ENCODE measurements at regions of chr17 and their contacts with region 1.

Region 1: GRCh38 chr17:38853292-38854219 is at the start of gene RPL23:
- DNase-seq: peak; percentile 83 to 97
- ATAC-seq: peak; percentile 77 to 91 (median 87)
- H3K4me3 ChIP-seq: peak within 1 kb of the TSS; percentile 75
- H3K4me3 Mint-ChIP-seq: peak within 1 kb of the TSS; percentile 96
- H3K27ac ChIP-seq: peak within 1 kb of the TSS; percentile 98
- H3K27ac Mint-ChIP-seq: peak within 1 kb of the TSS; percentile 99
- H3K4me1 ChIP-seq: peaks cover 29% of the 10 kb centered on the region
- H3K4me1 Mint-ChIP-seq: peaks cover 42 to 45% of the 10 kb centered on the region in 2 donors
- H3K27me3 ChIP-seq: no peaks in the 10 kb centered on the region
- H3K27me3 Mint-ChIP-seq: no peaks in the 10 kb centered on the region
- CTCF ChIP-seq: no peak
- total RNA-seq, gene RPL23: 752 to 934 (median 923) TPM

Region 2: DNA sequence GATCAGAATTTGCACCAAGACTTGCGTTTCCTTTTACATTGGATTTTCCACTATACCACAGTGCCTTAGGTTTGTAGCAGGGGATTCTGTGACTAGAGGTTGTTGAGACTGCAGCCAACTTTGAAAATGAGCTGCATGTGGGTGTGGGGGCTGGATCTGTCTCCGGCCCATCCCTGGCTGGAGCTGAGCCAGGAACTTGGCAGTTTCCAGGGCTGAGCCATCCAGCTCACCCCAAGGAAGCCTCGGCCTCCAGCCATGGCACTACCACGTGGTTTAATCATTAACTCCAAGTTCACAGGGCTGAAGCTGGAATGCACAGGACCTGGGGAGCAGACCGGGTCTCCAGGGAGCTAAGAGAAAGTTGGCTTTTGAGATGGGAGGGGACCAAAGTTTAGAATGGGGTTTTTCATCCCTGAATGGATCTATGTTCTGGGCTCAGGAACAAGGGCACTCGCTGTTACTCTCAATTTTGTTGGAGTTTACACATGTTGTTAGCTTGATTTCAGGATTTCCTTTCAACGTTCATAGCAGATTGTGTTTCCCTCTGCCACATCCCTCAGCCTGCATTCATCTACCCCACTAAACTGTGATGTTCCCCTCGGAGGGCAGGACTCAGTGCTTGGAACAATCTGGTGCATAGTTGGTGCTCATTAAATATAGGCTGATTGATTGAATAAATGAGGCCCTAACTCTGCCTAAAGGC is 1066.3 kb before region 1 on chr17:
- intact Hi-C with region 1: no loop called
- DNase-seq: no peak
- ATAC-seq: no peak
- H3K4me3 ChIP-seq: no peak overlapping the region
- H3K4me3 Mint-ChIP-seq: no peak overlapping the region
- H3K27ac ChIP-seq: no peak overlapping the region
- H3K27ac Mint-ChIP-seq: no peak overlapping the region
- H3K4me1 ChIP-seq: no peaks in the 10 kb centered on the region
- H3K4me1 Mint-ChIP-seq: no peaks in the 10 kb centered on the region
- H3K27me3 ChIP-seq: peaks cover 11% of the 10 kb centered on the region
- H3K27me3 Mint-ChIP-seq: peaks cover 27 to 47% of the 10 kb centered on the region in 2 donors
- CTCF ChIP-seq: no peak

Region 3: GRCh38 chr17:38824899-38825761 is 28.4 kb before region 1 on chr17 and contains the start of gene CWC25:
- intact Hi-C with region 1: loop called (anchors 1 kb)
- DNase-seq: peak; percentile 98 to 100
- ATAC-seq: peak; percentile 85 to 90 (median 85)
- H3K4me3 ChIP-seq: peak within 1 kb of the TSS; percentile 80
- H3K4me3 Mint-ChIP-seq: peak within 1 kb of the TSS; percentile 94
- H3K27ac ChIP-seq: peak within 1 kb of the TSS; percentile 89
- H3K27ac Mint-ChIP-seq: peak within 1 kb of the TSS; percentile 97 to 100
- H3K4me1 ChIP-seq: peaks cover 18% of the 10 kb centered on the region
- H3K4me1 Mint-ChIP-seq: peaks cover 27 to 39% of the 10 kb centered on the region in 2 donors
- H3K27me3 ChIP-seq: no peaks in the 10 kb centered on the region
- H3K27me3 Mint-ChIP-seq: no peaks in the 10 kb centered on the region
- CTCF ChIP-seq: no peak
- total RNA-seq, gene CWC25: 63.8 to 79.4 (median 74.4) TPM

Region 4: DNA sequence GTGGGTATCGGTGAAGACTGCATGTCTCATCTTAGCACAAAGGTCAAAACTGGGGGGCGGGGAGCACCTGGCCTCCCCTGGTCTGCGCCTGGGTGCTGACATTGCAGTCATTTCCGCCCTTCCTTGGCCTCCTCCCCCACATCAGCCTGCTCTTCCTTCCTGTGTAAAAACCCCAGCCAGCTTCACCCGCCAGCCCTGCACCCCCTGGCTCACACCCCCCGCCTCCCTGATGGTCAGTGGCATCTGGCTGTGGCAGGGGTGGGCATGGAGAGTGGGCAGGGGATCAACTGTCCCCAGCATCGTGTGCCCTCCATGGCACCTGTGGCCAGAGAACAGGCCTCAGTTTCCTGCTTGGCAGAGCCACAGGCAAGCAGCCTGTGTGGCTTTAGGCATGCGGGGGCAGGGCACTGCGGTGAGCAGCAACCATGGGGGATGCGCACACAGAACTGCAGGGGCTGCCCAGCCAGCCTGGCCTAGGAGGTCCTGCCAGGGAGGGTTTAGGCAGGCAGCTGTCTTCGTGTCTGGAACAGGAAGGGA is 45.3 kb after region 1 on chr17:
- intact Hi-C with region 1: loop called (anchors 1 kb)
- DNase-seq: peak; percentile 81 to 91
- ATAC-seq: peak; percentile 75 to 86 (median 78)
- H3K4me3 ChIP-seq: peak overlapping the region; percentile 14
- H3K4me3 Mint-ChIP-seq: peak overlapping the region; percentile 87
- H3K27ac ChIP-seq: peak overlapping the region; percentile 93
- H3K27ac Mint-ChIP-seq: peak overlapping the region; percentile 95
- H3K4me1 ChIP-seq: peaks cover 97% of the 10 kb centered on the region
- H3K4me1 Mint-ChIP-seq: peaks cover 62 to 72% of the 10 kb centered on the region in 2 donors
- H3K27me3 ChIP-seq: no peaks in the 10 kb centered on the region
- H3K27me3 Mint-ChIP-seq: no peaks in the 10 kb centered on the region
- CTCF ChIP-seq: no peak

Measured in natural killer cell (primary cell).